Spleen (tissue), 13 donors: ENCODE measurements at regions of chr4 and their contacts with region 1.

Region 1: GRCh38 chr4:986879-987623 is at the start of gene IDUA:
- DNase-seq: peak; percentile 98
- H3K4me3 ChIP-seq: peak within 1 kb of the TSS; percentile 50 to 93 (median 84)
- H3K27ac ChIP-seq: peak within 1 kb of the TSS; percentile 44 to 90 (median 80)
- H3K4me1 ChIP-seq: peaks cover 24 to 54% (median 43%) of the 10 kb centered on the region in 6 donors
- H3K27me3 ChIP-seq: no peaks in the 10 kb centered on the region
- CTCF ChIP-seq: peak; percentile 33 to 82 (median 63)
- POLR2A ChIP-seq: no peak
- total RNA-seq, gene IDUA: 18.3 to 58.3 (median 37.9) TPM

Region 2: GRCh38 chr4:762211-763190 is 224.6 kb before region 1 on chr4:
- intact Hi-C with region 1: loop called (anchors 10 kb)
- DNase-seq: no peak
- H3K4me3 ChIP-seq: no peak overlapping the region
- H3K27ac ChIP-seq: no peak overlapping the region
- H3K4me1 ChIP-seq: peaks cover 0 to 30% (median 8%) of the 10 kb centered on the region in 6 donors
- H3K27me3 ChIP-seq: no peaks in the 10 kb centered on the region
- CTCF ChIP-seq: peak in 1 of 11 experiments; percentile 18
- POLR2A ChIP-seq: no peak

Region 3: DNA sequence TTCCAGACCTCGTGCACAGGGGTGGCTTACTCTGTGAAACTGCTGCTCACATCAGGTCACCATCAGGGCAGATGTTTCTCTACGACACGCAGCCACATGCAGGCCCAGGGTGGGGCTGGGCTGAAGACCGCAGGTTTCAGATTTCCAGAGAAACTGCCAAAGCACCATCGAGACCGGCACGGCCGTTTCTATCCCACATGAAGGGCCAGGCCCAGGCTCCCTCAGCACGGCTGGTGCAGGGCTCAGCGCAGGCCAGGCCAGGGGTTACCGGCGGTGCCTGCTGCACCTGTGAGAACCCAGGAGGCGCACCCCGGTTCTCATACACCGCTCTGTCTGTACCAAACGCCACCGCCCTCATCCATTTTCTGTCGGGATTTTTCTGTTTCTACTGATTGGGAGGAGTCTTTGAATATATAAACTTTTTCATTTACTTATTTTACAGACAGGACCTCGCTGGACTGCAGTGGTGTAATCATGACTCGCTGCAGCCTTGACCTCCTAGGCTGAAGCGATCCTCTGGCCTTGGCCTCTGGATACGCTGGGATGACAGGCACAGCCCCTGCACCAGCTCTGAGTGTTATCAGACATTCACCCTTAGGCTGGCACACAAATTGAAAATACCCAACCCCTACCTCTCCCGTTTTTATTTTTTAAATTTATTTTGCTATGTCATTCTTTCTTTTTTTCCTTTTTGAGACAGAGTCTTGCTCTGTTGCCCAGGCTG is 244.7 kb after region 1 on chr4:
- intact Hi-C with region 1: no loop called
- DNase-seq: no peak
- H3K4me3 ChIP-seq: no peak overlapping the region
- H3K27ac ChIP-seq: no peak overlapping the region
- H3K4me1 ChIP-seq: peaks cover 4 to 57% (median 28%) of the 10 kb centered on the region in 6 donors
- H3K27me3 ChIP-seq: no peaks in the 10 kb centered on the region
- CTCF ChIP-seq: no peak
- POLR2A ChIP-seq: no peak